HEK293T (cell line): ENCODE measurements at regions of chr12 and their contacts with region 1.

Region 1: GRCh38 chr12:5988659-5989116 is 43.6 kb upstream of the ANO2 start:
- DNase-seq: peak; percentile 85

Region 2: GRCh38 chr12:6020926-6021325 is 32.2 kb after region 1 on chr12:
- CTCF ChIA-PET with region 1: no interaction called
- POLR2A ChIA-PET with region 1: no interaction called
- DNase-seq: no peak

Region 3: GRCh38 chr12:6033546-6033945 is 44.9 kb after region 1 on chr12:
- CTCF ChIA-PET with region 1: interaction called, 175 read pairs
- POLR2A ChIA-PET with region 1: interaction called, 6 read pairs
- DNase-seq: no peak

Region 4: DNA sequence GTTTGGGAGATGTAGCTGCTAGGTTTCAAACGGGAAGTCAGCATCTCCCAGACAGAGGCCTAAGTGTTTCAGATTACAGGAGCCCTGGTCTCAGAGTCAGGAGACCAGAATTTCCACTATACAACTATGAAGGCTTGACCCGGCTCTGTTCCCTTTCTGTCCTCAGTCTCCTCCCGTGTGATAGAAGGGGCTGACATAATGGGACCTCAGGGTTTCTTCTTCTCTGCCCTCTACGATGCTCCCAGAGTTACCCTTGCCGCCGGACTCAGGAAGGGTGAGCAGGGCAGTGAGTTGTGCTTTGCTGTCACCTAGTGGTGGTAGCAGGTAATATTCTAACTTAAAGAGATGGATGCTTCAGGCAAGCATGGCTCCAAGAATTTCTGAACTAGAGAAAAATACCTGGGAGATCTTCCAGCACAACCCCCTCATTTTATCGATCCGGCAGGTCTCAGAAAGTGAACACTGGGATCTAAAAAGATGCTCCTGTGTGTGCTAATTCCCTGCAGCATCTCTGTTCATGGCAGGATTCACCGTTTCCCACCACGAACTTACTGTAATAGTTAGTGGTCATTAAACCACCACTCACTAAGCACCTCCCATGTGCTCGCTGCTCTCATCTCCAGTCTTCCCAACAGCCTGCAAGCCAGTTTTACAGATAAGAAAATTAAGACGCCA is 51.3 kb after region 1 on chr12:
- CTCF ChIA-PET with region 1: interaction called, 175 read pairs
- POLR2A ChIA-PET with region 1: interaction called, 6 read pairs
- DNase-seq: peak; percentile 74

Region 5: DNA sequence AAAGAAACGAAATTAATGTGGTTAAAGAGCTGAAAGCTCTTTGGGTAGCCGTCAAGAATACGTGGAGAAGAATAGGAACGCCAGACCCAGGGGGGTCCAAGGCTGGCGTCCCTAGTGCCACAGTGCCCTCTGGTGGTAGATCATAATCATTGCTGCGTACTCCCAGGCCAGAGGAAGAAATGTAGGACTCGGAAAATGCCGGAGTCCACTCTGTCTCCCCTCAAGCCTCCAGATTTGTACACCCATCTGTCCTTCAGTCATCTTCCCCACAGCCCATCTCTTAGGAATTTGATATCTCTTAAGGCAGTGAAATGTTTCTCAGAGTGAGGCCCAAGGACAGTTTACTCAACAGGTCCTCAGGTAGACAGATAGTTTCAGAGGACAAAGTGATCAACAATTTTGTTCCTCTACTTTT is 296.4 kb after region 1 on chr12:
- CTCF ChIA-PET with region 1: interaction called, 11 read pairs
- POLR2A ChIA-PET with region 1: interaction called, 3 read pairs
- DNase-seq: peak; percentile 86